Activated B cell treated with CpG ODN at 0.5 μM for 24 hours (primary cell): ENCODE measurements at regions of chr15 and their contacts with region 1.

Region 1: DNA sequence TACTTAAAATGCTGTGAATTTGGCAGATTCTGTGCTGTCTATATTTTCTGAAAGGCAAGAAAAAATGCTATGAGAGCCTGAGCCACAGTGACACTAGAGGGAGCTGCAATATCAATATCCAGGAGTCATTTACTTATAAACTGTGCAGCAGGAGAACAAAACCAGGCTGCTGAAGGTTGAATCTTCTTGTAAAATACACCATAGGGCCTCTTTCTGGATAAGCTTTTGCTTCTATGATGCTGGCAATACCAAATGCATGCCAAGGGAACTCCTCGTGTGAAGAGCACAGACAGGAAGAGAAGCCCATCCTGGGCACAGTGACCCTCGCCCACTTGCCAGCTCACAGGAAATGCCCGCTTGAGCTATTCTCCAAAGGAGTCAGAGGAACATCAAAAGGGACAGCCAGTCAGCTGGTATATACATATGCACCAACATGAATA is 48.0 kb upstream of the TSPAN3 start:
- DNase-seq: no peak
- ATAC-seq: peak; percentile 62
- H3K4me3 Mint-ChIP-seq: no peak overlapping the region
- H3K27ac Mint-ChIP-seq: no peak overlapping the region
- H3K4me1 Mint-ChIP-seq: peaks cover 40% of the 10 kb centered on the region
- H3K27me3 Mint-ChIP-seq: no peaks in the 10 kb centered on the region
- CTCF ChIP-seq: no peak

Region 2: DNA sequence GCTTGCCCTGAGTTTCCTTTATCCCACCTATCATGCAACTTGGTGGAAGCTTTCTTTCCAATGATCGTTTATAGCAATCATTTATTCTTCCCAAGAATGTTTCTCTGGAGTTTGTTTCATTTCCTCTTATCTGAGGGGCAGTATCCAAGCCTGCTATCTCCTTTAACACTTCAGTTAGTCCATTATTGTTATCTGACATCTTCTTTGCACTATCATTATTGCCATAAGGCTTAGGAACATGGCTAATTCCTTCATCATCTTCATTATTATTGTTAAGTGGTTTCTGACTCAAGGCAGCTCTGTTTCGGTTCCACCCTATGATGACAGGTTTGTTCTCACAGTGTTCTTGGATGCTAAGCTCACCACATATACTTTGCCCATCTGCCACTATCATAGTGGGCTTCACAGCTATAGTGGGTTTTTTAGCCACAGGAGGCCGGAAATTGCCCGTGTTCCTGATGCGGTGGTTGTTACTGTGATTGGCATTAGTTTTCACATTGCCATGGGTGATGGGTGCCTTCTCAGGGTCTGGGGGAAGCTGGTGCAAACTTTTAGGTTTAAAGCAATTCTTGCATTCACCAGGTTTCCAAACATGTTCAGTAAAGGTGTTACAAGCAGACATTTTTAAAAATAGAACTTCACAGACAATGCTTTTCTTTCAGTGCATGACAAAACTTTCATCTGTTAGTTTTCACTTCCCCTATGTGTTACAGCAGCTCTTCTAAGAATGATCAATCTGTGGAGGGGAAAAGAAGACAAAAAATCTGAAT is 62.6 kb after region 1 on chr15:
- CTCF ChIA-PET with region 1: interaction called, 33 read pairs
- POLR2A ChIA-PET with region 1: interaction called, 3 read pairs
- intact Hi-C with region 1: loop called (anchors 1 kb)
- DNase-seq: peak; percentile 37
- ATAC-seq: peak; percentile 75
- H3K4me3 Mint-ChIP-seq: peak overlapping the region; percentile 78
- H3K27ac Mint-ChIP-seq: peak overlapping the region; percentile 94
- H3K4me1 Mint-ChIP-seq: peaks cover 82% of the 10 kb centered on the region
- H3K27me3 Mint-ChIP-seq: no peaks in the 10 kb centered on the region
- CTCF ChIP-seq: no peak

Region 3: DNA sequence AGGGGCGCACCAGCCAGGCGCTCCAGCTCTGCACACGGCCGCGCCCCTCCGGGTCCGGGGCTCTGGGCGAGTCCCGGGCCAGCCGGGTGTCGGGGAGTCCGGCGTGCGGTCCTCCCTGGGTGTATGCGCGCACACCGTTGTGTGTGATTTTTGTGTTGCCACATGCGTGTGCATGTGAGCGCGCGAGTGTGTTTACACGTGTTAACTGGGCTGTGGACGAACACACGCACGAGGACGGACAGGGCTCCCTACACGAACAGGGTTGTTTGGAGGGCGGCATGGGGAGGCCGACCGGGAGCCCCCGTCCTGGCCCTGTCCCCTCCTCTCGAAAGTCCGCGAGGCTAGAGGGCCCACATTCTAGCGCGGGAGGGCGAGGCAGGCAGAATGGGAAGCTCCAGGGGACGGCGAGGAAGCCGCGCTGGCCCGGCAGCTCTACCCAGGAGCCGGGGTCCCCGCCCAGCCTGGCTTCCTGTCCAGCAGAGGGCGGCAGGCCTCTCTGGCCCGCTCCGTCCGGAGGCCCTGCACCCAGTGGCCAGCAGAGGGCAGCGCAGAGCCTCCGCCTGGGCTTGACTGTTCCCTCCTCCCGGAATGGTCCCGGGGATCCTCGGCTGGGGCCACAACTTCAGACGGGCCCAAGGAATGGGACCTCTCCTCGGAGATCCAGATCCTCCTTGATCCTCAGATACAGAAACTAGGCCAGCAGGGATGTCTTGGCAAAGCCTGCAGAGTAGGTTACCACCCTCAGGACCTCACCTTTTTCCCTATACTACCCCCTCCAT is 514.4 kb after region 1 on chr15:
- CTCF ChIA-PET with region 1: interaction called, 3 read pairs
- POLR2A ChIA-PET with region 1: no interaction called
- intact Hi-C with region 1: loop called (anchors 5 kb)
- DNase-seq: peak; percentile 71
- ATAC-seq: peak; percentile 93
- H3K4me3 Mint-ChIP-seq: peak overlapping the region; percentile 75
- H3K27ac Mint-ChIP-seq: no peak overlapping the region
- H3K4me1 Mint-ChIP-seq: peaks cover 12% of the 10 kb centered on the region
- H3K27me3 Mint-ChIP-seq: peaks cover 45% of the 10 kb centered on the region
- CTCF ChIP-seq: peak; percentile 97